Endothelial cell of umbilical vein (primary cell): ENCODE measurements at regions of chr12 and their contacts with region 1.

Region 1: GRCh38 chr12:51871126-51871525 is 16.8 kb upstream of the ANKRD33 start:
- DNase-seq: no peak
- H3K4me3 ChIP-seq: no peak overlapping the region
- H3K27ac ChIP-seq: no peak overlapping the region
- H3K4me1 ChIP-seq: peaks cover 6% of the 10 kb centered on the region
- H3K27me3 ChIP-seq: no peaks in the 10 kb centered on the region
- CTCF ChIP-seq: no peak
- POLR2A ChIP-seq: no peak

Region 2: DNA sequence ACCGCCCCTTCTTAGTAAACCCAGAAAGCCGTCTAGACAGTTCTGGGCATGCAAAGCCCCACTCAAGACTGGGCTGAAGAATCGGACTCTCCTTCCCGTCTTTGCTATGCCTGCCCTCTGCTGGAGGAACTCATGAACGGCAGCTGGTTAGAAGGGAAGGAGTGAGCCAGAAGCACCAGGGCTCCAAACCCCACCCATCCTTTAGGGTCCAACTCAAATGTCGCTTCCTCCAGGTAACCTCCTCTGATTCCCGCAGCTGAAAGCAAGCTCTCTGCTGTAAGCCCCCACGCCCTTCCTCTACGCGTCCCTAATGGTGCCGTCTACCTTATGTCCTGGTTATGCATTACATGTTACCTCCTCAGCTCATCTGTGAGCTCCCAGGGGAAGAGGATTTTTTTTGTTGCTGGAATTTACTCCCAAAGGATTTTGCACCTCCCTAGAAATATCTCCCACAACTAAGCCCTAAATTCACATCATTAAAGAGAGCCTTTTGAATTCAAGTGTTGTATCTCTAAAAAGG is 339.1 kb before region 1 on chr12:
- CTCF ChIA-PET with region 1: interaction called, 21 read pairs
- POLR2A ChIA-PET with region 1: no interaction called
- dilution Hi-C with region 1: no loop called
- intact Hi-C with region 1: loop called (anchors 2 kb)
- DNase-seq: peak; percentile 73
- H3K4me3 ChIP-seq: no peak overlapping the region
- H3K27ac ChIP-seq: no peak overlapping the region
- H3K4me1 ChIP-seq: no peaks in the 10 kb centered on the region
- H3K27me3 ChIP-seq: peaks cover 2 to 3% of the 10 kb centered on the region in 2 experiments
- CTCF ChIP-seq: peak; percentile 82 to 90
- POLR2A ChIP-seq: no peak

Region 3: GRCh38 chr12:51814311-51815088 is 56.6 kb before region 1 on chr12:
- CTCF ChIA-PET with region 1: interaction called, 52 read pairs
- POLR2A ChIA-PET with region 1: no interaction called
- dilution Hi-C with region 1: no loop called
- intact Hi-C with region 1: loop called (anchors 2 kb)
- DNase-seq: peak; percentile 72
- H3K4me3 ChIP-seq: peak overlapping the region; percentile 40 to 46 (median 46)
- H3K27ac ChIP-seq: peak overlapping the region; percentile 74
- H3K4me1 ChIP-seq: peaks cover 9% of the 10 kb centered on the region
- H3K27me3 ChIP-seq: no peaks in the 10 kb centered on the region
- CTCF ChIP-seq: peak; percentile 73 to 80
- POLR2A ChIP-seq: peak; percentile 55

Region 4: GRCh38 chr12:51836041-51836826 is 34.9 kb before region 1 on chr12:
- CTCF ChIA-PET with region 1: interaction called, 23 read pairs
- POLR2A ChIA-PET with region 1: no interaction called
- dilution Hi-C with region 1: no loop called
- intact Hi-C with region 1: no loop called
- DNase-seq: no peak
- H3K4me3 ChIP-seq: no peak overlapping the region
- H3K27ac ChIP-seq: no peak overlapping the region
- H3K4me1 ChIP-seq: peaks cover 10% of the 10 kb centered on the region
- H3K27me3 ChIP-seq: peaks cover 3 to 18% of the 10 kb centered on the region in 2 experiments
- CTCF ChIP-seq: no peak
- POLR2A ChIP-seq: no peak

Region 5: GRCh38 chr12:51886021-51886322 is 14.8 kb after region 1 on chr12:
- CTCF ChIA-PET with region 1: interaction called, 44 read pairs
- POLR2A ChIA-PET with region 1: no interaction called
- dilution Hi-C with region 1: no loop called
- intact Hi-C with region 1: no loop called
- DNase-seq: peak; percentile 98
- H3K4me3 ChIP-seq: peak overlapping the region in 1 of 3 experiments; percentile 7
- H3K27ac ChIP-seq: peak overlapping the region; percentile 89
- H3K4me1 ChIP-seq: peaks cover 41% of the 10 kb centered on the region
- H3K27me3 ChIP-seq: no peaks in the 10 kb centered on the region
- CTCF ChIP-seq: no peak
- POLR2A ChIP-seq: peak; percentile 76